H1 (cell line): ENCODE measurements at regions of chr10 and their contacts with region 1.

Region 1: GRCh38 chr10:30583778-30584415 is 45.7 kb downstream of the LYZL2 start:
- DNase-seq: no peak
- H3K4me3 ChIP-seq: no peak overlapping the region
- H3K27ac ChIP-seq: no peak overlapping the region
- H3K4me1 ChIP-seq: peaks cover 0 to 3% (median 1%) of the 10 kb centered on the region in 4 experiments; a peak in 2 of 7 replicates
- H3K27me3 ChIP-seq: 0 out of 7 replicates have a peak, but pooled peaks cover 0 to 2% (median 0%) of the 10 kb centered on the region in 4 experiments
- CTCF ChIP-seq: no peak
- EP300 ChIP-seq: no peak
- POLR2A ChIP-seq: no peak
- RAD21 ChIP-seq: no peak

Region 2: DNA sequence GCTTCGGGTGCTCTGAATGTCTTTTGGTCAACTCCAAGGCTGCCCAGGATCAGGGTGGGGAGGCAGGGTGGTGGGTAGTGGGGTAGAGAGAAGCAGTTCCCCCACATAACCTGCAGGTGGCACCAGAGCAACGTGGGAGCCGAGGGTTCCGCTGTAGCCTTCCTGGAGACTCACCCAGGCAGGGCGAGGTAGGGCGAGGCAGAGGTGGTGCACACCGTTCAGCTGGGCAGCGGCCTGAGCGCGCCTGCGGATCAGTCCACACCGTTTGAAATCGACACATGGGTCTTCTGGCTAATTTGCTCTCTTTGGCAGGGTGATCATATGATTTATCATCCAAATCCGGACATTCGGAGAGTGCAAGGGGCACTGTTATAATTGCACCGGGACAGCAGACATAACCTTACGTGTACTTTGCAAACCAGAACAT is 191.3 kb before region 1 on chr10:
- CTCF ChIA-PET with region 1: interaction called, 129 read pairs
- POLR2A ChIA-PET with region 1: no interaction called
- DNase-seq: peak; percentile 47 to 93
- H3K4me3 ChIP-seq: no peak overlapping the region
- H3K27ac ChIP-seq: no peak overlapping the region
- H3K4me1 ChIP-seq: peaks cover 0 to 2% (median 0%) of the 10 kb centered on the region in 4 experiments; a peak in 2 of 7 replicates
- H3K27me3 ChIP-seq: no peaks in the 10 kb centered on the region
- CTCF ChIP-seq: peak; percentile 93 to 98 (median 93)
- EP300 ChIP-seq: no peak
- POLR2A ChIP-seq: no peak
- RAD21 ChIP-seq: peak; percentile 97 to 98

Region 3: GRCh38 chr10:30534465-30535144 is 49.3 kb before region 1 on chr10:
- CTCF ChIA-PET with region 1: interaction called, 31 read pairs
- POLR2A ChIA-PET with region 1: no interaction called
- DNase-seq: peak in 1 of 2 experiments; percentile 76
- H3K4me3 ChIP-seq: no peak overlapping the region
- H3K27ac ChIP-seq: no peak overlapping the region
- H3K4me1 ChIP-seq: peaks cover 0 to 9% (median under 1%) of the 10 kb centered on the region in 4 experiments; a peak in 2 of 7 replicates
- H3K27me3 ChIP-seq: no peaks in the 10 kb centered on the region
- CTCF ChIP-seq: peak; percentile 63 to 84 (median 71)
- EP300 ChIP-seq: no peak
- POLR2A ChIP-seq: no peak
- RAD21 ChIP-seq: peak; percentile 87 to 88

Region 4: DNA sequence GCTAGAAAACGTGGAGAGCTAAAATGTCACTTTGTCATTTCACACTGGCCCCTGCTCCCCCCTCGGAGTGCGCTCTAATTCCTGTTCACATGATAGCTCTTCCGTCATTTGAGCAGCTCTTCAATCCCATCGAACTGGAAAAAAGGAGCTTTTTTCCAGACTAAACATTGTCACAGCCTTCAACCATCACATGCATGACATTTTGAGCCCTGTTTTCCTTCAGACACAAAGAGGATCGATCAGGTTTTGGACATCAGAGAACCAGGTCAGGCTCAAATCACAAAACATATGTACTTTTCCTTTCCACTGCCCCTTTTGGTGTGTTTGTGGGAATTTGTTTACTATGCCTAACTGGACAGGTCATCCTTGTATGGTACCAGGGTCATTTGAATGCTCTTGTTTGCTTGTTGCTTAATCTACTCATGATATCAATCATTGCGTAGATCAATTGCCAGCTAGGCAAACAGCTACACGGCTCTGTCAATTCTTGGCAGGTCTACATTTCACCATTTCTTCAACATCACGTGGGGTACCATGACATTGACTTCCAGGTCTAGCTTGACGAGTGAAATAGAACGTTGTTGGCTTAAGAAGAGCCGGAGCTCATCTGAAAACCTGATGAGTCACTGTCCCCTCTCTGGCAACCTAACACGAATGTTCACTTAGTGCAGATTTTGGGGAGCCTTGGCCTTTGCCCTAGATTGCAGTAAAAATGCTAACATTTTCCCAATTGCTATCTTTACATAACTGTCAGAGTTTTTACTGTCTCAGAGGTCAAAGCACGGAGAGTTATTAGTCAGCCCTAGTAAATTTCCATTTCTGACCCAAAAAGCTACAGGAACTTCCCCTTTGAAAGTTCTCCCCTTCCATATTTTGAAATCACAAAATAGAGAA is 41.6 kb before region 1 on chr10:
- CTCF ChIA-PET with region 1: interaction called, 31 read pairs
- POLR2A ChIA-PET with region 1: no interaction called
- DNase-seq: no peak
- H3K4me3 ChIP-seq: no peak overlapping the region
- H3K27ac ChIP-seq: no peak overlapping the region
- H3K4me1 ChIP-seq: peaks cover 0 to 8% (median 3%) of the 10 kb centered on the region in 4 experiments; a peak in 3 of 7 replicates
- H3K27me3 ChIP-seq: no peaks in the 10 kb centered on the region
- CTCF ChIP-seq: no peak
- EP300 ChIP-seq: no peak
- POLR2A ChIP-seq: no peak
- RAD21 ChIP-seq: no peak

Region 5: DNA sequence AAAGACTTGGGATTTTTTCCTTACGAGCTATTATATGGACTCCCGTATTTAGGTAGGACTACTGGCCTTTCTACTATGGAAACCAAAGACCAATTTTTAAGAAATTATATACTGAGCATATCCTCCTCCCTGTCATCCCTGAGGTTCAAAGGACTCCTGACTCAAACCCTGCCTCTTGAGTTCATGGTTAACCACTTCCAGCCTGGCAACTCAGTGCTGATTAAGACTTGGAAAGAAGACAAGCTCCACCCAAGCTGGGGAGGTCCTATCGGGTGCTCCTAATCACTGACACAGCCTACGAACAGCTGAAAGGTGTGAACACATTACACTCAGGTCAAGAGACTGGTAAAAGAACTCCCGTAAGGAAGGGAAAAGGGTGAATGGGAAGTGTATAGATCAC is 21.1 kb before region 1 on chr10:
- CTCF ChIA-PET with region 1: interaction called, 19 read pairs
- POLR2A ChIA-PET with region 1: interaction called, 5 read pairs
- DNase-seq: no peak
- H3K4me3 ChIP-seq: no peak overlapping the region
- H3K27ac ChIP-seq: no peak overlapping the region
- H3K4me1 ChIP-seq: peaks cover 0 to 3% (median 0%) of the 10 kb centered on the region in 4 experiments; a peak in 2 of 7 replicates
- H3K27me3 ChIP-seq: no peaks in the 10 kb centered on the region
- CTCF ChIP-seq: no peak
- EP300 ChIP-seq: no peak
- POLR2A ChIP-seq: no peak
- RAD21 ChIP-seq: no peak

Region 6: DNA sequence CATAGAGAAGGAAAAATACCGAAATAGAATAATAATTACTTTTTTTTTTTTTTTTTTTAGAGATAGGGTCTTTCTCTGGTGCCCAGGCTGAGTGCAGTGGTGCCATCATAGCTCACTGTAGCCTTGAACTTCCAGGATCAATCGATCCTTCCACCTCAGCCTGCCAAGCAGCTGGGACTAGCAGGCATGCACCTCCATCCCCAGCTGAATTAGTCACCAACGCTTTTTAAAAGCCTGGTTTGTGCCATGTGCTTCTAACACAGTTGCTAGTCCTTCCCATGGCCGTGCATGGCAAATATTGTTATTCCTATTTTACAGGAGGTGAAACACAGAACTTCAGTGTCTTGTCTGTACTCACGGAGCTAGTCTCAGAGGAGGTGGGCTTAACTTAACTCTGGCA is 22.4 kb after region 1 on chr10:
- CTCF ChIA-PET with region 1: interaction called, 16 read pairs
- POLR2A ChIA-PET with region 1: no interaction called
- DNase-seq: peak in 1 of 2 experiments; percentile 17
- H3K4me3 ChIP-seq: no peak overlapping the region
- H3K27ac ChIP-seq: no peak overlapping the region
- H3K4me1 ChIP-seq: no peaks in the 10 kb centered on the region
- H3K27me3 ChIP-seq: peaks cover 0 to 2% (median 0%) of the 10 kb centered on the region in 4 experiments; a peak in 1 of 7 replicates
- CTCF ChIP-seq: no peak
- EP300 ChIP-seq: no peak
- POLR2A ChIP-seq: no peak
- RAD21 ChIP-seq: no peak